ENCODE measurements at regions of chr13 and their contacts with region 1.

Region 1: DNA sequence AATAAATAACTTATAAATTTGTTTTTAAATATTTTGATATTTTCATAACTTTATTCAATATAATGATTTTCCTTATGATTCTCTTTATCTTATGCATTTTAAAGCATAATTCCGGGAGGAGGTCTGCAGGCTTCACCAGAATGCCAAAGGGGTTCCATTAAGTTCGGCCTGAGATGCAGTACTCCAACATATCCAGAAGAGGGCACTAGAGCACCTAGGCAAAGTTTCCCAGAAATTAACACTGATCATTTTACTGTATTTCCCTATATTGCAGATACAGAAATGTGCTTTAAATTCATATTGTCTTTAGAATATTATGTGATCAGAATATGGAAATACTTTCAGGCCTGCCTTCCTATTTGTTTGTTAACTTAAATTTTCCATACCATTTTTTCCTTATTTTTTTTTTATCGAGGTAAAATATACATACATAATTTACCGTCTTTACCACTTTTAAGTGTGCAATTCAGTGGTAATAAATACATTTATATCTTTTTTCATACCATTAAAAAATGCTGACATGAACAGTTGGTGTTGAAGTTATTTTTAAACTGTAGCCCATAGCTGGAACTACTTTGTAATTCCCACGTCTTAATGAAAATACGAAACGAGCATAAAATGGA is 58.9 kb upstream of the TM9SF2 start:
- DNase-seq: peak; percentile 69
- H3K4me3 Mint-ChIP-seq: no peak overlapping the region
- H3K27ac Mint-ChIP-seq: no peak overlapping the region
- H3K4me1 Mint-ChIP-seq: peaks cover 7% of the 10 kb centered on the region
- H3K27me3 Mint-ChIP-seq: no peaks in the 10 kb centered on the region

Region 2: GRCh38 chr13:99464441-99464949 is 22.1 kb after region 1 on chr13:
- CTCF ChIA-PET with region 1: interaction called, 5 read pairs
- intact Hi-C with region 1: loop called (anchors 1 kb)
- DNase-seq: peak; percentile 22
- H3K4me3 Mint-ChIP-seq: peak overlapping the region; percentile 28
- H3K27ac Mint-ChIP-seq: peak overlapping the region; percentile 80
- H3K4me1 Mint-ChIP-seq: peaks cover 30% of the 10 kb centered on the region
- H3K27me3 Mint-ChIP-seq: no peaks in the 10 kb centered on the region

Region 3: DNA sequence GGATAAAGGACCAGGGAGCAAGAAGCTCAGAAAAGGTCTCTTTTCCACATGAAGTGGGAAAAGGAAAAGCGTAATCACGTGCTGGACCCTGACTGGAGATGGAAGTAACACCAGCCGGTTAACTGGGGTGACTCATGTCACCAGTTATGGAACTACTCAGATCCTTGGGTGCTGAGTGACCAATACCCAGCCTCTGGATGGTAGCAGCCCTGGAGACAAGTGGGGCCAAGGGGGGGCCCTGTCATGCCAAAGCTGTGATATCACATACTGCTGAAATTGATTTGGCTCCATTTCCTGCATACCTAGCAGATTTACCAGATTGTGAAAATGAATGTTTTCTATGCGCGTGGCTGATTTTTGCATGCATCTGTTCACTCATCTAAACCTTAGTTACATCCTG is 370.2 kb after region 1 on chr13:
- CTCF ChIA-PET with region 1: no interaction called
- intact Hi-C with region 1: loop called (anchors 10 kb)
- DNase-seq: no peak
- H3K4me3 Mint-ChIP-seq: no peak overlapping the region
- H3K27ac Mint-ChIP-seq: no peak overlapping the region
- H3K4me1 Mint-ChIP-seq: peaks cover 6% of the 10 kb centered on the region
- H3K27me3 Mint-ChIP-seq: no peaks in the 10 kb centered on the region

Region 4: DNA sequence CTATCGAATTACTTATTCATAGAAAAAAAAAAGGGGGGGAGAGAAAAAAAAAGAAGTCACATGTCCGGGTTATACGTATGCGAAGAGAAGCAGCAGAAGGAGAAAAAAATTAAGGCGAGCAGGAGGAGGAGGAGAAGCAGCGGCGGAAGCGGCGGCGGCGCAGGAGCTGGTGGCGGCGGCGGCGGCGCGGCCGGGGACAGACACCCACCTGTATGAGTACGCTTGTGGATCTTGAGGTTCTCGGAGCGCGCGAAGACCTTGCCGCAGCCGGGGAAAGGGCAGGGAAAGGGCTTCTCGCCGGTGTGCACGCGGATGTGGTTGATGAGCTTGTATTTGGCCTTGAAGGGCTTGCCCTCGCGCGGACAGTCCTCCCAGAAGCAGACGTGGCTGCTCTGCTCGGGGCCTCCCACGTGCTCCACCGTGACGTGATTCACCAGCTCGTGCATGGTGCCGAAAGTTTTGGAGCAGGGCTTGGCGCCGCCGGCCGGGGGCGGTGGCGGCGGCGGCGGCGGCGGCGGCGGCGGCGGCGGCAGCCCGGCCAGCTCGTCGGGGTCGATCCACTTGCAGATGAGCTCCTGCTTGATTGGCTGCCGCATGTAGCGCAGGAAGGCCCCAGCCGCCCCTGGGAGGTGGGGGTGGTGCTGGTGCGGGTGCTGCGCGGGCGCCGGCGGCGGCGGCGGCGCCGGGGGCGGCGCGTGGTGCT is 527.7 kb after region 1 on chr13:
- CTCF ChIA-PET with region 1: no interaction called
- intact Hi-C with region 1: loop called (anchors 10 kb)
- DNase-seq: peak; percentile 53
- H3K4me3 Mint-ChIP-seq: peak overlapping the region; percentile 71
- H3K27ac Mint-ChIP-seq: peak overlapping the region; percentile 30
- H3K4me1 Mint-ChIP-seq: peaks cover 23% of the 10 kb centered on the region
- H3K27me3 Mint-ChIP-seq: peaks cover 75% of the 10 kb centered on the region

Region 5: GRCh38 chr13:100514788-100515409 is 1072.5 kb after region 1 on chr13:
- CTCF ChIA-PET with region 1: no interaction called
- intact Hi-C with region 1: loop called (anchors 2 kb)
- DNase-seq: peak; percentile 85
- H3K4me3 Mint-ChIP-seq: no peak overlapping the region
- H3K27ac Mint-ChIP-seq: no peak overlapping the region
- H3K4me1 Mint-ChIP-seq: peaks cover 9% of the 10 kb centered on the region
- H3K27me3 Mint-ChIP-seq: no peaks in the 10 kb centered on the region

Region 6: GRCh38 chr13:100892981-100893380 is 1450.6 kb after region 1 on chr13:
- CTCF ChIA-PET with region 1: no interaction called
- intact Hi-C with region 1: no loop called
- DNase-seq: no peak
- H3K4me3 Mint-ChIP-seq: no peak overlapping the region
- H3K27ac Mint-ChIP-seq: no peak overlapping the region
- H3K4me1 Mint-ChIP-seq: no peaks in the 10 kb centered on the region
- H3K27me3 Mint-ChIP-seq: peaks cover 9% of the 10 kb centered on the region

Measured in activated naive CD4-positive, alpha-beta T cell treated with anti-CD3 and anti-CD28 coated beads for 36 hours (primary cell).